ENCODE measurements at regions of chr10 and their contacts with region 1.

Region 1: GRCh38 chr10:95907456-95908253 is at the start of gene CC2D2B:
- DNase-seq: peak; percentile 73
- H3K4me3 Mint-ChIP-seq: peak within 1 kb of the TSS; percentile 90
- H3K27ac Mint-ChIP-seq: peak within 1 kb of the TSS; percentile 89
- H3K4me1 Mint-ChIP-seq: peaks cover 14% of the 10 kb centered on the region
- H3K27me3 Mint-ChIP-seq: no peaks in the 10 kb centered on the region
- total RNA-seq, gene CC2D2B: not detected

Region 2: DNA sequence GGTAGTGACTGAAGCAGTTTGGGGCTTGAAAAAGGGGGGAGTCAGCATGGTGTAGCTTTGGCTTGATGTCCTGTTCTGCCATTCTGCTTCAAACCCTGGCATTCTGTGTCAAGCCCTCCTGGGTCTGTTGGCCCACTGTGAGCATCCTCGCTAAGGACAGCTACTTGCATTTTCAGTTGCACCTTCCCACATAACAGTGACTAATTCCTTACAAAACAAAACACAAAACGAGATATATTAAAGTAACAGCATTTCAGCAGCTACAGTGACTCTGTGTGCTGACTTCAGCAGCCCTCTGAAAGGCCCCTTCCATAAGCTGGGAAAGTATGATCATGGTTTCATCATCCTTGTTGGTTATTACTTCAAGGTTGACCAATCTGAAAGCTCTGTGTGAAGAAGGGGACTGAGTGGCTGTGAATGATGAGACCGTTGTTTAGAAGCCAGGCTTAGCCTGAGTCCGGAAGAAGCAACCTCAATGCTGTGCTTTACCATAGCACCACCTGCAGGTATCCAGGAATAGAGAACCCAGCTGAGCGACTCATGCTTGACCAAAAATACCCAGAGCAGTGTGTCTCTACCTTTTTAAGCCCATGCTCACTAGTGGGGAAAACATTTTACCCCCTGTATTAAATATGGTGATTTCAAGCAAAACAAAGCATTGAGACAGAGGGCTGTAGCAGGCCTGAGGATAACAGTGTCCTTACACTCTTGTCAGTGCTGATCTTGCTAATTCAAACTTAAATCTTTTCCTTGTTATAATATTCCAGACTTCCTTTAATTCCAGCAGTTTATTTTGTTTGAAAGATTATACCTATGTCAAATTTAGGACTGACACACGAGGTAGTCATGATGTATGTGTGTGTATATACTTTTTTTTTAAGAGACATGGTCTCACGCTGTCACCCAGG is 42.5 kb before region 1 on chr10:
- CTCF ChIA-PET with region 1: interaction called, 3 read pairs
- intact Hi-C with region 1: loop called (anchors 2 kb)
- DNase-seq: peak; percentile 64
- H3K4me3 Mint-ChIP-seq: no peak overlapping the region
- H3K27ac Mint-ChIP-seq: no peak overlapping the region
- H3K4me1 Mint-ChIP-seq: peaks cover 12% of the 10 kb centered on the region
- H3K27me3 Mint-ChIP-seq: no peaks in the 10 kb centered on the region

Region 3: DNA sequence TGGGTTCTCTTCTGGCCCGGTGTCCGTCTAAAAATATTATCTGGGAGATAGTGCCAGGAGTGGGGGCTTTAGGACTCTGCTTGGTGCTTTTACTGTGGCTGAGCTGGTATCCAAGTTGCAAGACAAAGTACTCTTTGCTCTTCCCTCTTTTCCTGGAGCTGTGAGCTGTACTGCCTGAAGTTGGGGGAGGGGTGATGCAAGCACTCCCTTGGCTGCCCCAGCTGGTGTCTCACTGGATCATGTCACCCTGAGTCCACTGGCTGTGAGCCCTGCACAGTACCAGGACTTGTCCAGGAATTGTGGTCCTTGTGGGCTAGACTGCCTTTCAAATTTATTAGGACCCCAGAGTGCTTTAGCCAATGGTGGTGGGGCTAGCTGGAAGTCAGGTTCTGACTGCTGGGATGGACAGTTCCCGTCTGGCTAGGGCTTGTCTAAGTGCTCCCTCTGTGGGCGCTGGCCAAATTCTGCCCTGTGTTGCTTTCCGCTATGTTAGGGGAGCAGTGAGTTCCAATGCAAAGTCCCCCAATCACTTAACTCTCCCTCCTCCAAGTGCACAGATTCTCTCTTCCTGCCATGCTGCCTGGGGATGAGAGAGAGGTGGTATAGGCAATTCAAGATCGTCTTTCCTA is 13.3 kb after region 1 on chr10:
- CTCF ChIA-PET with region 1: no interaction called
- intact Hi-C with region 1: no loop called
- DNase-seq: no peak
- H3K4me3 Mint-ChIP-seq: no peak overlapping the region
- H3K27ac Mint-ChIP-seq: no peak overlapping the region
- H3K4me1 Mint-ChIP-seq: no peaks in the 10 kb centered on the region
- H3K27me3 Mint-ChIP-seq: no peaks in the 10 kb centered on the region

Region 4: GRCh38 chr10:96017191-96017687 is 109.6 kb after region 1 on chr10:
- CTCF ChIA-PET with region 1: interaction called, 3 read pairs
- intact Hi-C with region 1: loop called (anchors 10 kb)
- DNase-seq: peak; percentile 53
- H3K4me3 Mint-ChIP-seq: no peak overlapping the region
- H3K27ac Mint-ChIP-seq: no peak overlapping the region
- H3K4me1 Mint-ChIP-seq: no peaks in the 10 kb centered on the region
- H3K27me3 Mint-ChIP-seq: no peaks in the 10 kb centered on the region

Region 5: DNA sequence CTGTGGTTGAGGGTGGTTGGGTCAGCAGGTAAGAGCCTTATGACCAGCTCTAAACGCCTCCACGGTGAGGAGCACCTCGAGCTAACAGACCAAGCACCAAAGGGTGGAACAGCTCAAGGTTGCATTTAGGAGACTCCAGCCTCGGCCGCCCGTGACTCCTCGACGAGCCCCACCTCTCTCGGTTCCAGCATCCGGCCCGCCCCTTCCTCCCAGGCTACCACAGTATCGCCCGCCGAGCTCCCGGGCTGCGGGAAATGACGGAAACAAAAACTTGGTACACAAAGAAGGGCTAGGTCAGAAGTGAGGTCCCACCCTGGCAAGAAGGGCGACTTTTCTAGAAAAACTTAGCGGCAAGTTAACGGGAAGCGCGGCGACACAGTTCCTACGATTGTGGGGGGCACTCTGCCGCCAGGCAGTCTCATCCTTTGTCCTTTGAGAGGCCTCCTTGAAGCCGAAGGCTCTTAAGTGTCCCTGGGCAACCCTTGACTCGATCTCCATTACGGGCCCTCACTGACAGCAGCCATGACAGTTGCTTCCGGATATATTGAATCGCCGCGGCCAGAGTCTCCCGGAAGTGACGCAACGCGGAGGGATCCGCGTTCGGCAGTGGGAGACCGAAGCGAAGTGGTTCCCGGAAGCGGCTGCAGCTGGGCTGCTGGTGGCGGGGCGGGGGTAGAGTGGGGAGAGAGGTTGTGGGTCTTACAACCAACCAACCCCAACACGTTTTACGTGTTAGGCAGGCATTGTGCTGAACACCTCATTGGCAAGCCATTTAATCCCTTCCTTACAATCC is 182.2 kb after region 1 on chr10:
- CTCF ChIA-PET with region 1: no interaction called
- intact Hi-C with region 1: loop called (anchors 2 kb)
- DNase-seq: peak; percentile 95
- H3K4me3 Mint-ChIP-seq: peak overlapping the region; percentile 92
- H3K27ac Mint-ChIP-seq: peak overlapping the region; percentile 98
- H3K4me1 Mint-ChIP-seq: peaks cover 5% of the 10 kb centered on the region
- H3K27me3 Mint-ChIP-seq: peaks cover 13% of the 10 kb centered on the region

Region 6: DNA sequence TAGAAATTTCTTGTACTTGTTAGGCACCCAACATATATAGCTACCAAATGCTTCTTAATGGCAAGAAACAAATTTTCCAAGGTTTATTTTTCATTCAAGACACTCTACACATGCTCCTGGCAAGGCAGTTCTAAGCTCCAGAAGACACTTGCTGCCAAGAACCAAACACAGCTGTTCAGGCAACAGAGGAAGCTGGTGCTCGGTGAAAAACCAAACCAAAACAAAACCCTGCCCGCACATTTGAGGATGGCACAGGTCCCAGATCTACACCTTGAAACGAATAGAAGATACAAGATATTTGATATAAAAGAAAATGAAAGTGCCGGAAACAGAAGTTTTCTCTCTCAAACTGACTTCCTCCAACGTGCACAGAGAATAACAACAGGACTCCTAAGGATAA is 391.7 kb after region 1 on chr10:
- CTCF ChIA-PET with region 1: no interaction called
- intact Hi-C with region 1: loop called (anchors 2 kb)
- DNase-seq: peak; percentile 47
- H3K4me3 Mint-ChIP-seq: peak overlapping the region; percentile 48
- H3K27ac Mint-ChIP-seq: peak overlapping the region; percentile 73
- H3K4me1 Mint-ChIP-seq: peaks cover 43% of the 10 kb centered on the region
- H3K27me3 Mint-ChIP-seq: peaks cover 3% of the 10 kb centered on the region